ENCODE measurements at regions of chr14 and their contacts with region 1.

Region 1: DNA sequence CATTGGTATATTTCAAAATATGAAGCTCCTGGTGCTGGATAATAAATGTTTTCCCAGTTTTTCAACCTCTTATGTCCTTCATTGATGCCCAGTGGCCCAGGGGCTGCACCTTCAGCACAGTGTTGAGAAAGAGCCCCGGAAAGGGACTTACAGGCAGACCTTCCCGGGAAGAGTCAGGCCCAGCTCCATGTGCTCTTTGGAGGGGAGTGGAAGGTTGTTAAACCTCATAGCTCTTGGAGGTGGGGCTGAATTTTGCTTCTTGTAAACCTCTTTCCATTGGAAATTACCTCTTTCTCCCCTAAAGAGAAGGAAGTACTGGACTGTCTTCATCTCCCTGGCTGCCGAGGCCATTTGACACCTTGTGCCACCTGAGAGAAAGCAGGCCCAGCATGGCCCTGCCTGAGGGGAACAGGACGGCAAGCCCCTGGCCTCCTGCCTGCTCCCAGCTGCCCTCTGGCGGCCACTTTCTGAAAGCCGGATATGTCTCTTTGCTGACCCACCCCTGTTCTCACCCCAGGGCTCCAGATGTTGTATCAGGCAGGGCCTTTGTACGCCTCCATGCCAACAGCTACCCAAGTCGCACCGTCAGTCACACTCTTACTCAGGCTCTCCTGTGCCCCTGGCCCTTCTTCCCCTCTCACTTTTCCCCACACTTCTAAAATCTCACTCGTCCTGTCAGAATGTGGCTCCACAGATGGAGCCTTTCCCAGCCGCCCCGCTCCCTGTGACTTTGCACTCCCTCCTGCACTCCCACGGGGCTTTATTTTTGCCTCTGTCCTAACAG is 43.0 kb downstream of the EVL start:
- DNase-seq: peak; percentile 69
- H3K4me3 ChIP-seq: no peak overlapping the region
- H3K27ac ChIP-seq: no peak overlapping the region
- H3K4me1 ChIP-seq: peaks cover 19% of the 10 kb centered on the region
- H3K27me3 ChIP-seq: no peaks in the 10 kb centered on the region
- CTCF ChIP-seq: peak; percentile 86 to 97
- POLR2A ChIP-seq: no peak

Region 2: GRCh38 chr14:99971087-99971940 is 136.9 kb before region 1 on chr14:
- CTCF ChIA-PET with region 1: interaction called, 11 read pairs
- POLR2A ChIA-PET with region 1: no interaction called
- dilution Hi-C with region 1: no loop called
- intact Hi-C with region 1: no loop called
- DNase-seq: peak; percentile 85
- H3K4me3 ChIP-seq: peak overlapping the region; percentile 47 to 80 (median 49)
- H3K27ac ChIP-seq: no peak overlapping the region
- H3K4me1 ChIP-seq: peaks cover 7% of the 10 kb centered on the region
- H3K27me3 ChIP-seq: peaks cover 10 to 12% of the 10 kb centered on the region in 2 experiments
- CTCF ChIP-seq: no peak
- POLR2A ChIP-seq: peak; percentile 33

Region 3: DNA sequence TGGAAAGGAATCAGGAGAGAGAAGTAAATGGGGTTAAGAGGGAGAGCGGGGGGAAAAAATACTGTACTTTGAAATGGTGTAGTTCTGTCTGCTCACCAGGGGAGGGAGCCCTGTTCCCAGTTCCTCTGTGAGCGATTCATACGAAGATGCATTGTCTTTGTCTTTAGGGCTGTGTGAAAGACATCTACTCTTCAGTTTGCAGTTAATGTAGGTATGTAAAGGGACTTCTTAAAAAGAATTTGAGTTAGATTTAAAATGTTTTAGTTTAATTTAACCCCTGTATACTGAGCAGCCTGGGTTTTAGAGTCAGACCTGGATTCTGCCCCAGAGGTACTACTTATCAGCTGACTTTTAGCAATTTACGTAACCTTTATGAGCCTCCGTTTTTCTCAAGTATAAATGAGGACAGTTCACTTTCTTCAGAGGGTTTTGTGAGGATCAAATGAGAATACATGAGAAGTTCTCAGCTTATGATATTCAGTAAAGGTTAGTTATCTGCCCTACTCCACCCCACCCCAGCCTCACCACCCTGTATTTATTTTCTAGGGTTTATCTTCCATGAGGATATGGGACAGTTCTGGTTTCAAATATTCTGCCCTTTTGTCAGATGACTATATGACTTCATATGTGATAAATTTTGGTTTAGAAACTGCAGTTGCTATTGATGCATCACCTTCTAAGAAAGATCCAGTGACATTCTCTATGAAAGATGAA is 125.5 kb before region 1 on chr14:
- CTCF ChIA-PET with region 1: interaction called, 150 read pairs
- POLR2A ChIA-PET with region 1: no interaction called
- dilution Hi-C with region 1: no loop called
- intact Hi-C with region 1: loop called (anchors 1 kb)
- DNase-seq: peak; percentile 73
- H3K4me3 ChIP-seq: no peak overlapping the region
- H3K27ac ChIP-seq: no peak overlapping the region
- H3K4me1 ChIP-seq: peaks cover 6% of the 10 kb centered on the region
- H3K27me3 ChIP-seq: no peaks in the 10 kb centered on the region
- CTCF ChIP-seq: peak; percentile 75 to 82
- POLR2A ChIP-seq: no peak

Region 4: DNA sequence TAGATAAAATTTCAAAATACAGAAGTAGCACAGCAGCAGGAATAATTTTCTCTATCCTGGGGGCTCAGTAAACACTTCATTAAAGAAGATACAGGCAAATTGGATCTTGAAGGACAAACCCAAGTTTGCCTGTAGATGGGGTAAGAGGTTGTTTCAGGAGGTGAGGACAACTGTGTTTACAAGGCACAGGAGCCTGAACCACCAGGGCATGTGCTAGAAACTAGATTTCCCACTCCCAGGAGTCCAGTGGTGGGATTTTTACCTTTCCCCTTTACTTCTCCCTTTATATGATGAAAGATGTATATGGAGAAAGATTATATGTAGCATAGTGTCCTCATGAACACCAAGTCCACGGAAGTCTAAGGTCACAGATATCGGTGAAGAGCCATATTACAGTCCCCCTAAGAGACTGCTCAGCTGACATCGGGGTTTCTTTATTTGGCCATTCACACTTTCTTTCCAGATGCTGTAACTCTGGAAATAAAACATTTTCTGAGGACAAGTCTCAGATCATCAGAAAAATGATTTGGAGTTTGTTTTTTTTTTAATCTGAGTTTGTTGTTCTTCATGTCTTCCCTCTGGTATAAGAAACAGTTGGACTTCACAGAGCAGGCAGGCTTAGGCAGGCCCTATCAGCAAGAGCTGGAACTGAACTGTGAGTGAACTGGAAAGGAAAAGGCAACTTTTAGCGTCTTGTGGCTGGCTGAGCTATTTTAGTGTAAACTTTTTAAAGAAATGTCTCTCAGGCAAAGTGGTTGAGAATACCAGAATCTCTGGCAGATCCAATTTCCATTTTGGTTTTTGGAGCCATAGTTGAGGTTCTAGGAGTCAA is 51.1 kb before region 1 on chr14:
- CTCF ChIA-PET with region 1: interaction called, 39 read pairs
- POLR2A ChIA-PET with region 1: no interaction called
- dilution Hi-C with region 1: no loop called
- intact Hi-C with region 1: loop called (anchors 1 kb)
- DNase-seq: peak; percentile 39
- H3K4me3 ChIP-seq: no peak overlapping the region
- H3K27ac ChIP-seq: no peak overlapping the region
- H3K4me1 ChIP-seq: peaks cover 9% of the 10 kb centered on the region
- H3K27me3 ChIP-seq: no peaks in the 10 kb centered on the region
- CTCF ChIP-seq: peak in 1 of 2 donors; percentile 28
- POLR2A ChIP-seq: no peak

Region 5: GRCh38 chr14:100140452-100141078 is 32.3 kb after region 1 on chr14:
- CTCF ChIA-PET with region 1: interaction called, 22 read pairs
- POLR2A ChIA-PET with region 1: interaction called, 7 read pairs
- dilution Hi-C with region 1: no loop called
- intact Hi-C with region 1: loop called (anchors 1 kb)
- DNase-seq: peak; percentile 81
- H3K4me3 ChIP-seq: no peak overlapping the region
- H3K27ac ChIP-seq: peak overlapping the region; percentile 83
- H3K4me1 ChIP-seq: peaks cover 31% of the 10 kb centered on the region
- H3K27me3 ChIP-seq: no peaks in the 10 kb centered on the region
- CTCF ChIP-seq: peak; percentile 57 to 84
- POLR2A ChIP-seq: no peak